Panc1 (cell line): ENCODE measurements at regions of chr15 and their contacts with region 1.

Region 1: GRCh38 chr15:70806992-70807712 is 43.8 kb upstream of the UACA start:
- DNase-seq: no peak
- ATAC-seq: no peak
- H3K4me3 ChIP-seq: no peak overlapping the region
- H3K27ac ChIP-seq: peak overlapping the region; percentile 65
- H3K4me1 ChIP-seq: peaks cover 22% of the 10 kb centered on the region
- H3K27me3 ChIP-seq: no peaks in the 10 kb centered on the region
- CTCF ChIP-seq: no peak

Region 2: GRCh38 chr15:70569091-70569621 is 238.0 kb before region 1 on chr15:
- CTCF ChIA-PET with region 1: interaction called, 11 read pairs
- POLR2A ChIA-PET with region 1: no interaction called
- in situ Hi-C with region 1: no loop called
- intact Hi-C with region 1: no loop called
- DNase-seq: peak; percentile 17
- ATAC-seq: peak; percentile 95
- H3K4me3 ChIP-seq: no peak overlapping the region
- H3K27ac ChIP-seq: peak overlapping the region; percentile 40
- H3K4me1 ChIP-seq: peaks cover 21% of the 10 kb centered on the region
- H3K27me3 ChIP-seq: no peaks in the 10 kb centered on the region
- CTCF ChIP-seq: peak; percentile 89

Region 3: DNA sequence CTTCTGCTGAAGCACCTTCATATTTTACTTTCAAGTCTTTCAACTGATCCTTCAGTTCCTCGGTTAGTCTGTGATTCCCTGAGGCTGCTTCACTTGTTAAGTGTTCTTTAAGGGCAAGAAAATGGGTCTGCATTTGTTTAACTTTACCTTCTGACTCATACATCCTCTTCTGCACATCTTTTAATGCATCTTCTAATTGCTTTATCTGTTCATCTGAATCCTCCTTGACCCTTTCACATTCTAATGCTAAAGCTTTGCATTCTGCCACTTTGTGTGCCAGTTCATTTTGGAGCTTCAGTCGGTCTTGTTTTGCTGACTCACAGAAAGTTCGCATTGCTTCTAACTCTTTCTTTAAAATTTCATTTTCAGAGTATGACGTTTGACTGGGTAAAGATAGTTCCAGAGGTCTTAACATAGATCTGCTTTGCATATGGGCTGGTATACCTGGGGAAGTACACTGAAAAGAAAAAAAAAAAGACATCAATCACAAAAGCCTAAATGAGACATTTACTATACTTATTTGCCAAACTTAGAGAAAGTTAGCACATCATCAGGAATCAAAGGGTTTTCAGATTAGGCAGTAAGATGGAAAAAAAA is 138.0 kb before region 1 on chr15:
- CTCF ChIA-PET with region 1: interaction called, 10 read pairs
- POLR2A ChIA-PET with region 1: no interaction called
- in situ Hi-C with region 1: no loop called
- intact Hi-C with region 1: no loop called
- DNase-seq: no peak
- ATAC-seq: no peak
- H3K4me3 ChIP-seq: no peak overlapping the region
- H3K27ac ChIP-seq: no peak overlapping the region
- H3K4me1 ChIP-seq: no peaks in the 10 kb centered on the region; the same call in 1 of the 2 replicates
- H3K27me3 ChIP-seq: no peaks in the 10 kb centered on the region
- CTCF ChIP-seq: no peak

Region 4: GRCh38 chr15:70679919-70680231 is 127.3 kb before region 1 on chr15:
- CTCF ChIA-PET with region 1: no interaction called
- POLR2A ChIA-PET with region 1: interaction called, 6 read pairs
- in situ Hi-C with region 1: no loop called
- intact Hi-C with region 1: loop called (anchors 5 kb)
- DNase-seq: no peak
- ATAC-seq: no peak
- H3K4me3 ChIP-seq: no peak overlapping the region
- H3K27ac ChIP-seq: no peak overlapping the region
- H3K4me1 ChIP-seq: no peaks in the 10 kb centered on the region; the same call in 1 of the 2 replicates
- H3K27me3 ChIP-seq: no peaks in the 10 kb centered on the region
- CTCF ChIP-seq: peak; percentile 22; the same call in 1 of the 2 replicates

Region 5: GRCh38 chr15:70763120-70763878 is 43.9 kb before region 1 on chr15 and contains the start of gene UACA:
- CTCF ChIA-PET with region 1: interaction called, 6 read pairs
- POLR2A ChIA-PET with region 1: interaction called, 16 read pairs
- in situ Hi-C with region 1: no loop called
- intact Hi-C with region 1: loop called (anchors 5 kb)
- DNase-seq: peak; percentile 95
- ATAC-seq: peak; percentile 95
- H3K4me3 ChIP-seq: peak within 1 kb of the TSS; percentile 93
- H3K27ac ChIP-seq: peak within 1 kb of the TSS; percentile 100
- H3K4me1 ChIP-seq: peaks cover 42% of the 10 kb centered on the region
- H3K27me3 ChIP-seq: no peaks in the 10 kb centered on the region
- CTCF ChIP-seq: no peak
- total RNA-seq, gene UACA: 303 TPM